Activated CD4-positive, alpha-beta memory T cell treated with anti-CD3 and anti-CD28 coated beads, Interleukin-2, amount 10 ng/mL, durations not matched to agents 7 days and 5 days (primary cell): ENCODE measurements at regions of chr1 and their contacts with region 1.

Region 1: DNA sequence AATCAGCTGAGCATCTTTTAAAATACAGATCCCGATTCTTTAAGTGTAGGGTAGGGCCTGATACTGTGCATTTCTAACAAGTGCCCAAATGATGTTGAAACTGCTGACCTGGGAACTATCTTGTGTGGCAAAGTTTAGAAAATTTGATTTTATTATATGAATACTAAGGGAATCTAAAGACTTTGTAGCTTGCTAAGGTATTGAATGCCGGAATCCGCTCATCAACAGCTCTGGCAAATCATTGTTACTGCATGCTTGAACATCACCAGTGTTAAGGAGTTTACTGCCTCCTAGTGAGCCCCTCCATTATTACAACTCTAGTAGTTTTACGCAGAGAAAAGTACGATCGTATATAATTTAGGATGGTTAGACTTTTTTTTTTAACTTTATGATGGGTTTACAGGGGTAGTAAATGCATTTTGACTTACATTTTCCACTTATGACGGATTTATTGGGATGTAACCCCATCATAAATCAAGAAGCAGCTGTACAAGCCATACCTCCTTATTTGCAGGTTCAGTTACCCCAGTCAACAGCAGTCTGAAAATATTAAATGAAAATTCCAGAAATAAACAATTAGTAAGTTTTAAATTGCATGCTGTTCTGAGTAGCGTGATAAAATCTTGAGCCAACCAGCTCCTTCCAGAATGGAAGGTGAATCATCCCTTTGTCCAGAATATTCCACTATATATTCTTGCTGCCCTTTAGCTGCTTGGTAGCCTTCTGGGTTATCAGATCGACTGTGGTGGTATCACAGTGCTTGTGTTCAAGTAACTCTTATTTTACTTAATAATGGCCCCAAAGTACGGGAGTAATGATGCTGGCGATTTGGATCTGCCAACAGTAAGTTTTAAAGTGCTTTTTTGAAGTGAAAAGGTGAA is 892 bp downstream of the TYW3 start:
- DNase-seq: peak; percentile 40
- H3K4me3 Mint-ChIP-seq: peak overlapping the region; percentile 92
- H3K27ac Mint-ChIP-seq: peak overlapping the region; percentile 98
- H3K4me1 Mint-ChIP-seq: peaks cover 44% of the 10 kb centered on the region
- H3K27me3 Mint-ChIP-seq: no peaks in the 10 kb centered on the region

Region 2: GRCh38 chr1:74197657-74198552 is 535.9 kb before region 1 on chr1 and contains the starts of genes FPGT and LRRIQ3:
- CTCF ChIA-PET with region 1: interaction called, 6 read pairs
- POLR2A ChIA-PET with region 1: interaction called, 11 read pairs
- DNase-seq: peak; percentile 96
- H3K4me3 Mint-ChIP-seq: peak within 1 kb of the TSS; percentile 74
- H3K27ac Mint-ChIP-seq: peak within 1 kb of the TSS; percentile 72
- H3K4me1 Mint-ChIP-seq: peaks cover 15% of the 10 kb centered on the region
- H3K27me3 Mint-ChIP-seq: no peaks in the 10 kb centered on the region
- total RNA-seq, gene FPGT: 9.1 to 11.0 TPM
- total RNA-seq, gene LRRIQ3: 0.63 to 0.90 TPM

Region 3: GRCh38 chr1:74689621-74690363 is 44.1 kb before region 1 on chr1:
- CTCF ChIA-PET with region 1: interaction called, 31 read pairs
- POLR2A ChIA-PET with region 1: no interaction called
- DNase-seq: peak; percentile 33
- H3K4me3 Mint-ChIP-seq: no peak overlapping the region
- H3K27ac Mint-ChIP-seq: no peak overlapping the region
- H3K4me1 Mint-ChIP-seq: no peaks in the 10 kb centered on the region
- H3K27me3 Mint-ChIP-seq: peaks cover 4% of the 10 kb centered on the region

Region 4: GRCh38 chr1:74971982-74972381 is 238.1 kb after region 1 on chr1:
- CTCF ChIA-PET with region 1: no interaction called
- POLR2A ChIA-PET with region 1: no interaction called
- DNase-seq: no peak
- H3K4me3 Mint-ChIP-seq: no peak overlapping the region
- H3K27ac Mint-ChIP-seq: no peak overlapping the region
- H3K4me1 Mint-ChIP-seq: no peaks in the 10 kb centered on the region
- H3K27me3 Mint-ChIP-seq: no peaks in the 10 kb centered on the region